Activated B cell treated with CpG ODN at 0.5 μM for 24 hours (primary cell): ENCODE measurements at regions of chrX and their contacts with region 1.

Region 1: DNA sequence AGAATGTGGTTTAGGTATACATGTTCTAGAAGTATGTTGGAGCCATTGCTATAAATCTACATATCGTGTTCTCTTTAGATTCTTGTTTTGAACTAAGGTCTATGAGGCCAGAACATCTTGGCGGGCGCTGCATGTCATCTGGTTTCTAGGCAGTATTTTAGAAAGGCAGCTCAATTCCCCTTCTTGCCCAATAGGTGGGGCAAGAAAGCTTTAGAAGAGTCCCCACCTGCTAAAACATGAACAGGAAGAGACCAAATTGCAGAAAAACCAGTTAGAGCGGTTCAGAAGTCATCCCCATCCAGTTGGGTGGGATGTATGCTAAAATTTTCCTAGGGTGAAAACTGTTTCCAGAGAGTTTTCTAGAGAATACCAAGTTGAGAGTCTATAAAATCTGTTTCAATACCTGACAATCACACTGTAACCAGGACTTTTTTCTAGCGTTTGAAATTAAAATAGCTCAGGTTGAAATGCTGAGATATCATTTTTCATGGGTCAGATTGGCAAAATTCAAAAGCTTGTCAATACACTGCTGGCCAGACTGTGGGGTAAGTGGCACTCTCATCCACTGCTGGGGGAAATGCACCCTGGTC is 17.5 kb upstream of the SH3KBP1 start:
- DNase-seq: no peak
- ATAC-seq: peak; percentile 68
- H3K4me3 Mint-ChIP-seq: no peak overlapping the region
- H3K27ac Mint-ChIP-seq: no peak overlapping the region
- H3K4me1 Mint-ChIP-seq: peaks cover 12% of the 10 kb centered on the region
- H3K27me3 Mint-ChIP-seq: no peaks in the 10 kb centered on the region
- CTCF ChIP-seq: no peak

Region 2: GRCh38 chrX:19593690-19594089 is 311.2 kb before region 1 on chrX:
- CTCF ChIA-PET with region 1: interaction called, 3 read pairs
- POLR2A ChIA-PET with region 1: no interaction called
- intact Hi-C with region 1: loop called (anchors 5 kb)
- DNase-seq: no peak
- ATAC-seq: no peak
- H3K4me3 Mint-ChIP-seq: no peak overlapping the region
- H3K27ac Mint-ChIP-seq: no peak overlapping the region
- H3K4me1 Mint-ChIP-seq: peaks cover 2% of the 10 kb centered on the region
- H3K27me3 Mint-ChIP-seq: no peaks in the 10 kb centered on the region
- CTCF ChIP-seq: no peak

Region 3: GRCh38 chrX:19855700-19856381 is 49.0 kb before region 1 on chrX:
- CTCF ChIA-PET with region 1: no interaction called
- POLR2A ChIA-PET with region 1: no interaction called
- intact Hi-C with region 1: no loop called
- DNase-seq: no peak
- ATAC-seq: no peak
- H3K4me3 Mint-ChIP-seq: peak overlapping the region; percentile 58
- H3K27ac Mint-ChIP-seq: peak overlapping the region; percentile 92
- H3K4me1 Mint-ChIP-seq: peaks cover 65% of the 10 kb centered on the region
- H3K27me3 Mint-ChIP-seq: no peaks in the 10 kb centered on the region
- CTCF ChIP-seq: no peak

Region 4: DNA sequence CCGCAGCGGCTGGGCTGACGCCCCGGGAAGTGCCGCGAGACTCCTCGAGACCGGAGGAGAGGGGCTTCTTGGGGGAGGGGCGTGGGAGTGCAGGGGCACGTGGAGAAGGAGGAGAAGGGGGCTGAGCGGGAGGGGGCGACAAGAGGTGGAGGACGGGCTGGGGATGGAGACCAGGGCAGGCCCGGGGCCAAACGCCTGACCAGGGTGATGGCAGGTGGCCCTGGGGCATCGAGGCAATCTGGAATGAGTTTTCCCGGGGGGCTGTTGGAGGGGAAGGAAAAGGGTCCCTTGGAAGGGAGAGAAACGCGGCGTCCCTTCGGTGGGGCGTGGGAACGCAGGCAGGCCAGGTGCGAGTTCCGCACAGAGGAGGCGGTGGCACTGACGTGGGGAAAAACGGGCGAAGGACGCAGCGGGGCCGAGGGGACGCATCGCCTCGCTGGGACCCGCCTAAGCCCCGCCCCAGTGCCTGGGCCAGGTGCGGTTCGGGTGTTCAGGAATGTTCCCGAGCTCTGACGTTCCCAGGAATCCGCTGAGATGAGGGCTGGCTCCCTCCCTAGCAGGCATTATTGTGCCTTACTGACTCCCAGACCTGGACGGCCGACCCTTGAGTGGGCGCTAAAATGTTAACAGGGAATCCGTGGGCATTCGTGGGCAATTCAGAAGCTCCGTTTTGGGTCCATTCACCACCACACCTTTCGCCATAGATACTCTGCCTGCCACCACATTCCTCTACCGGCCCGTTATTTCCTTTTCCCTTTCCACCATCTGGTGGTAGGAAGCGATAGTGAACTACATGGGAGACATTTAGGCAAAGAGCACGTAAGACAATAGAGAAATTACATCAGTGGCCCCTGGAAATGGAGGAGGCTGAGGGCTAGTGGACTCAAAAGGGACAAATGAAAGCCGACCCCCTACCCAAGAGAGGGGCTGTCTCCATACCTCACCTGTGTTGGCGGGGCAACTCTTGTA is 16.7 kb before region 1 on chrX:
- CTCF ChIA-PET with region 1: interaction called, 3 read pairs
- POLR2A ChIA-PET with region 1: no interaction called
- intact Hi-C with region 1: loop called (anchors 1 kb)
- DNase-seq: peak; percentile 44
- ATAC-seq: peak; percentile 33
- H3K4me3 Mint-ChIP-seq: peak overlapping the region; percentile 83
- H3K27ac Mint-ChIP-seq: peak overlapping the region; percentile 76
- H3K4me1 Mint-ChIP-seq: peaks cover 36% of the 10 kb centered on the region
- H3K27me3 Mint-ChIP-seq: no peaks in the 10 kb centered on the region
- CTCF ChIP-seq: no peak

Region 5: DNA sequence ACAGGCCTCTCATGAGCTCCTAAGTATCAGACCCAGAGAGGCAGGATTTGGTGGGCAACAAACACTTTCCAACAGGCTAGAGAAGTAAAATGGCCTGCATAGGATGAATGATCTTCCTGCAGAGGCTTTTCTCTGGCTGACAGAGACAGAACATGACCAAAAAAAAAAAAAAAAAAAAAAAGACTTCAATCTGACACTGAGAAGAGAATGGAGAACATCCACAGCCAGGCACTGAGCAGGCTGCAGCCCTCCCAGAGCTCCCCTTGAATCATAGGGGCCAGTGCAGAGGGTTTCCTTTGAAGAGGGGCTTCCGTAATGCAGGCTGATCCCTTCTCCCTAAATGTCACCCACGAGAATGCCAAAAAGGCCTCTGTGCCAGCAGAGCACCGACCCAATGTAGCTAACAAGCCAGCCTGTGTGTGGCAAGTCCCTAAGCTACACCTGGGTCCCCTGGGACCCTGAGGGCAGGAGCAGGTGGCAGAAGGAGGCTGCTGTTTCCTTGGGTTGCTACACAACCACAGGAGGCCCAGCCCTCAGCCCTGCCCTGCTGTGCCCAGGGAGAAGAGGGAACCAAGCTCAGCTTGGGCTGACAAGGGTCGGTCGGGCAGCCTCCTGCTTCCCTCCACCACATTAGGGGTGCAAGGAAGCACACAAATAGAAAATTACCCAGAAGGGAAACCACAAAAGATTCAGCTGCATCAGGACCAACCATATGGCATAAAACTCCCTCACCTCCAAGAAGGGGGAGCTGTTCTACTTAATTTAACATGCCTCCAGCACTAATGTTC is 156.3 kb after region 1 on chrX:
- CTCF ChIA-PET with region 1: interaction called, 11 read pairs
- POLR2A ChIA-PET with region 1: no interaction called
- intact Hi-C with region 1: no loop called
- DNase-seq: peak; percentile 59
- ATAC-seq: peak; percentile 94
- H3K4me3 Mint-ChIP-seq: peak overlapping the region; percentile 41
- H3K27ac Mint-ChIP-seq: peak overlapping the region; percentile 89
- H3K4me1 Mint-ChIP-seq: peaks cover 32% of the 10 kb centered on the region
- H3K27me3 Mint-ChIP-seq: no peaks in the 10 kb centered on the region
- CTCF ChIP-seq: no peak

Region 6: DNA sequence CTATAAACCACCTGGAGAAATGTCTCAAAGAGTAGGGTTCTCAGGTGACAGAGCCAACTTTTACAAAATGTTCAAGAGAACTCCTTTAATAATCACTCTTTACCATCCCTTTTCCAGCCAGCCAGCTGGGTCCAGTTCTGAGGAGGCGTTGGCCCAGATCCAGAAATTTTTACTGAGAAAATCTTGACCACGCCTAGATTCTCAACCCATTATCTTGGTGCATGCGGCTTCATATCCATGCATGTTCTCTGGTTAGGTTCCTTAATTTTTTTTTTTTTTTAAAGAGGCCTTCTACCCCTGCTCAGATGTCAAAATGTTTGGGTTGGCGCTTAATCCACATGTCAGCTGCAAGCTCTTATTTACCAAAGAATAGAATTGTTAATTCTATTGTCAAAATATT is 223.8 kb after region 1 on chrX:
- CTCF ChIA-PET with region 1: no interaction called
- POLR2A ChIA-PET with region 1: no interaction called
- intact Hi-C with region 1: loop called (anchors 5 kb)
- DNase-seq: no peak
- ATAC-seq: no peak
- H3K4me3 Mint-ChIP-seq: no peak overlapping the region
- H3K27ac Mint-ChIP-seq: no peak overlapping the region
- H3K4me1 Mint-ChIP-seq: no peaks in the 10 kb centered on the region
- H3K27me3 Mint-ChIP-seq: no peaks in the 10 kb centered on the region
- CTCF ChIP-seq: no peak

Region 7: GRCh38 chrX:20427173-20427770 is 522.4 kb after region 1 on chrX:
- CTCF ChIA-PET with region 1: no interaction called
- POLR2A ChIA-PET with region 1: no interaction called
- intact Hi-C with region 1: no loop called
- DNase-seq: no peak
- ATAC-seq: no peak
- H3K4me3 Mint-ChIP-seq: no peak overlapping the region
- H3K27ac Mint-ChIP-seq: no peak overlapping the region
- H3K4me1 Mint-ChIP-seq: peaks cover 7% of the 10 kb centered on the region
- H3K27me3 Mint-ChIP-seq: no peaks in the 10 kb centered on the region
- CTCF ChIP-seq: no peak